Activated CD4-positive, alpha-beta T cell treated with anti-CD3 and anti-CD28 coated beads for 36 hours (primary cell): ENCODE measurements at regions of chr22 and their contacts with region 1.

Region 1: GRCh38 chr22:26398741-26399153 is 30.3 kb upstream of the ASPHD2 start:
- DNase-seq: peak; percentile 82
- ATAC-seq: peak; percentile 94
- H3K4me3 Mint-ChIP-seq: no peak overlapping the region
- H3K27ac Mint-ChIP-seq: no peak overlapping the region
- H3K4me1 Mint-ChIP-seq: peaks cover 2% of the 10 kb centered on the region
- H3K27me3 Mint-ChIP-seq: peaks cover 4% of the 10 kb centered on the region

Region 2: DNA sequence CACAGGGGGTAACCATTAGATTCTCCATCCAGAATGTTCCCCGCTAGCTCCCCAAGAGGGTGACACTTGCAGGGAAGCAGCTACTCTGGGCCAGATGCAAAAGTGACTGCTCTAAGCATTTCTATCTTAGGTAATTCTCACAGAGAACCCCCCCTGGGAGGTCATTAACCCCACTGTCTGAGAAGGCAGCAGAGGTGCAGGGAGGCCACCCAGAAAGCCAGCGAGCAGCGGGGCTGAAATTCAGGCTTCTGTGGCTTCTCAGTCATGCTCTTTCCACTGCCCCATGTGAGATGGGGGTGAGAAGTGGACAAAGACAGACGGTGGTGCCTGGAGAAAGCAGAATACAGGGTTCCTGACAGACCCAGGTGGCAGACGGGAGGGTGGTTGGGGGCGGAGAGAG is 84.1 kb before region 1 on chr22:
- CTCF ChIA-PET with region 1: no interaction called
- POLR2A ChIA-PET with region 1: no interaction called
- intact Hi-C with region 1: no loop called
- DNase-seq: no peak
- ATAC-seq: no peak
- H3K4me3 Mint-ChIP-seq: no peak overlapping the region
- H3K27ac Mint-ChIP-seq: no peak overlapping the region
- H3K4me1 Mint-ChIP-seq: no peaks in the 10 kb centered on the region
- H3K27me3 Mint-ChIP-seq: peaks cover 8% of the 10 kb centered on the region

Region 3: DNA sequence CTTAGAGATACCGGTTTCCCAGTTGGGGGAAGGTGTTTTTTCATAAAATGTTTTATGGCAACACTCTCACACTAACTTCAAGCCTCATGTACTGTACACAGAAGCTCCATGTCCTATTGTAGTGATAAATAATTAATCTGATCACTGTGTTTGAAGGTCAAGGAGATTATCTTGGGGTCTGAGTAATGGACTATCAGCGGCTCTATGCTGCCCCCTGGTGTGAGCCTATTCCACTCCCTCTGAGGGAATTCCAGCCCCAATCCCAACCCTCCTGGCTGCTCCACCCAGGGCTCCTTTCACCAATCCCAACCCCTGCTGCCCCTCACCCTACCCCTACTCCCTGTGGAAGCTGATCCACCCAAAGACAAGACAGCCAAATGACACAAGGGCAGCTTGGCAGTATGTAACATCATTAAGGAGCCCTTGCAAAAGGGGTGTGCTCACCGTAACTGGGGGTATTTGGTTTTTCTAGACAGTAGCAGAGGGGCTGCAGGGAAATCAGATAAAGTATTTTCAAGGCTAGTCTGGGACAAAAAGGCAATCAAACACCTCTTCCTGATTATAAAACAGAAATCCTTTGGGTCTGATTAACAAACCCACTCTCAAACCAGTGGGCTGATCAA is 62.6 kb after region 1 on chr22:
- CTCF ChIA-PET with region 1: interaction called, 38 read pairs
- POLR2A ChIA-PET with region 1: no interaction called
- intact Hi-C with region 1: loop called (anchors 1 kb)
- DNase-seq: peak; percentile 61
- ATAC-seq: no peak
- H3K4me3 Mint-ChIP-seq: no peak overlapping the region
- H3K27ac Mint-ChIP-seq: no peak overlapping the region
- H3K4me1 Mint-ChIP-seq: no peaks in the 10 kb centered on the region
- H3K27me3 Mint-ChIP-seq: no peaks in the 10 kb centered on the region

Region 4: DNA sequence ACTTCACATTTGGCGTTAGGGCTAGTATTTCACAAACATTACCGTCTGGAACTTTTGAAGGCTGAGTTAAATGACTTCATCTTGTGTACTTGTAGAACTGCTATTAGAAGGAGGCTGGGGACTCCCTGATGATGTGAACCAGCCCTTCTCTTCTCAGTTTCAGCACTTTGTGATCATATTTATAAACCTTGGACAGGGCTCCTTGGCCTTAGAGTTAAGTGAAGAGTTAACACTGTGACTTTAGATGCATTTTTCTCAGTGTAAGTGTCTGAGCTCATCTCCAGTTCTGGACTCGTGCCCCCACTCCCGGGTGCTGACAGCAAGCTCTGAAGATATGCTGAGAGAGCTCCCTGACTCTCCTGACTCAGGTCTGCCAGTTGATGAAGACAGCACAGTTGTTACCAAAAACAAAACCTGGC is 267.1 kb after region 1 on chr22:
- CTCF ChIA-PET with region 1: no interaction called
- POLR2A ChIA-PET with region 1: no interaction called
- intact Hi-C with region 1: loop called in 1 of 2 experiments (anchors 1 kb)
- DNase-seq: no peak
- ATAC-seq: peak; percentile 23
- H3K4me3 Mint-ChIP-seq: no peak overlapping the region
- H3K27ac Mint-ChIP-seq: peak overlapping the region; percentile 71
- H3K4me1 Mint-ChIP-seq: peaks cover 42% of the 10 kb centered on the region
- H3K27me3 Mint-ChIP-seq: no peaks in the 10 kb centered on the region